Body of pancreas (tissue), 4 donors: ENCODE measurements at regions of chr6 and their contacts with region 1.

Region 1: DNA sequence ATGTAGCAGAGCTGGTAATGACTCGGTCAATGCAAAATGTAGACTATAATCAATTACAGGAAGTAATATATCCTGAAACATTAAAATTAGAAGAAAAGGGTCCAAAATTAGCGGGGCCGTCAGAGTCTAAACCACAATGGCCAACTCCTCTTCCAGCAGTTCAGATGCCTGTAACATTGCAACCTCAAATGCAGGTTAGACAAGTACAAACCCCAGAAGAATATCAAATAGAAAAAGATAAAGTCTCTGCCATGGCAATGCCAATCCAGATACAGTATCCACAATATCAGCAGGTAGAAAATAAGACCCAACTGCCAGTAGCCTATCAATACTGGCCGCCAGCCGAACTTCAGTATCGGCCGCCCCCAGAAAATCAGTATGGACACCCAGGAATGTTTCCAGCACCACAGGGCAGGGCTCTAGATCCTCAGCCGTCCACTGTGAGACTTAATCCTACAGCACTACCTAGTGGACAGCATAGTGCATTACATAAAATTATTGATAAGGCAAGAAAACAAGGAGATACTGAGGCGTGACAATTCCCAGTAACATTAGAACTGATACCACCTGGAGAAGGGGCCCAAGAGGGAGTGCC is 158.4 kb downstream of the GPX5 start:
- DNase-seq: peak in 3 of 4 donors; percentile 7 to 12 (median 10)
- ATAC-seq: no peak
- H3K4me3 ChIP-seq: no peak overlapping the region
- H3K27ac ChIP-seq: no peak overlapping the region
- H3K4me1 ChIP-seq: no peaks in the 10 kb centered on the region
- H3K27me3 ChIP-seq: peaks cover 0 to 11% of the 10 kb centered on the region in 2 donors
- CTCF ChIP-seq: peak in 6 of 7 experiments; percentile 28 to 47 (median 35)
- POLR2A ChIP-seq: no peak

Region 2: DNA sequence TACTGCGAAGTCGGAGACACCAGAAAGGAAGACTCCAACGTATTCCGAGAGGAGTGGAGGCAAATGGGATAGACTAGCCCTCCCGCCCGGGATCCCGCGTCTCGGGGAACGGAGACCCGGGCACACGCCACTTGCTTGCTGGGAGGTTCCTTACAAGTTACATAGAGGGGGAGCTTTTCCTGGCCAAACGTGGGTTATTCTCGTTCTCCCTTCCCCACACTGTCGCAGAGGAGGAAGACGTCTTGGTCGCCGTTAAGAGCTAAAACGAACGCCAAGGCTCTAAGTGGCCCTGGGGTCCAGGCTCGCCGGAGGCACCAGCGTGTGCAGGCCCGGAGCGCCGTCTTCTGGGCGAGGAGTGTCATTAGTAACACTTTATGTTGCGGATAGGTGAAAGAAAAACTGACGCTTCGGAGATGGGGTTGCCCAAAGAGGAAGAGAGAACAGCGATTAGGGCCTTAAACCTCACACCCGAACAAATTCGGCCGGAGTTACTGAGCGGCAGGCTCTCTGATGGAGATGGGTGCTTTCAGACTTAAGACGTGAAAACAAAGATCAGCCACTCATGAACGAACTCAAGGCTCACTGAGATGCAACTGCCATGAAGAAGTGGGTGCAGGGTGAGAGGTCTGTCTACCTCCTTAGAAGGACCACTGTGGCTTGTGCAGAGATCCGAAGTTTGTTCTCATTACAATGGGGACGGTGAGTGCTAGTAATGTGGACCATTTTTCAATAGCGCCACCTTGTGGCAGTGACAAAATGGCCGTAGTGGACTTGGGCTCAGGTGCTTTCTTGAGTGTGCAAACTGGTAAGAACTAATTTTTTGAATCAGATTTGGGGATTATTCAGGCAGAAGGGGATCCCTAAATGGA is 332.8 kb after region 1 on chr6:
- intact Hi-C with region 1: loop called (anchors 5 kb)
- DNase-seq: peak; percentile 78 to 87 (median 84)
- ATAC-seq: peak; percentile 87
- H3K4me3 ChIP-seq: peak overlapping the region in 1 of 2 donors; percentile 24
- H3K27ac ChIP-seq: no peak overlapping the region
- H3K4me1 ChIP-seq: peaks cover 10% of the 10 kb centered on the region
- H3K27me3 ChIP-seq: peaks cover 0 to 7% of the 10 kb centered on the region in 2 donors
- CTCF ChIP-seq: peak; percentile 26 to 87 (median 81)
- POLR2A ChIP-seq: no peak

Region 3: DNA sequence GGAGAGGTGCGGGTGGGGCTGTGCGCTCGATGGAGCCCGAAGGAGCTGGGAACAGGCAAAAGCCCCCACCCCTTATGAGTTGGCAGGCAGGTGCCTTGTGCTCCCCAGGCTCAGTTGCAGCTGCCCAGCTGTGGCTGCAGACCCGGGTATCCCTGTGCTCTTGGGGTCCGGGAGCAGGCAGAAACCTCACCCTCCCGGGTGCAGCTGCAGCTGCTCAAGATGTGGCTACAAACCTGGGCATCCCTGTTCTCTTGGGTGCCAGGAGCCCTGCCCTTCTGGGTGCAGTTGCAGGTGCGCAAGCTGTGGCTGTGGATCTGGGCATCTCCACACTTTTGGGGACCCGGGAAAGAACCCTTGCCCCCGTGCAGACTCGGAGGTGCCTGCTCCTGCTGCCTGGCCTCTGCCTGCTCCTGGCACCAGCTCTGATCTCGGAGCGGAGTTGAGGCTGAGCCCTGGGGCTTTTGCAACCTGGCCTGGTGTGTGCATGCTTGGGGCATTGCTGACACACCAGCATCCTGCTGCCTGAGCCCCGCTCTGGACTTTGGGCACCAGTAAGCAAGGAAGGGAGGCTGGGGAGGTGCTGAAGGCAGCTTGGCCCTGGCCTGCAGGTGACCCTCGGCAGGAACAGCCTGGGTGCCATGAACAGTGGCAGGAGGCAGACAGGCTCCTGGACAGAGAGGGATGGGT is 445.4 kb after region 1 on chr6:
- intact Hi-C with region 1: no loop called
- DNase-seq: no peak
- ATAC-seq: no peak
- H3K4me3 ChIP-seq: no peak overlapping the region
- H3K27ac ChIP-seq: no peak overlapping the region
- H3K4me1 ChIP-seq: no peaks in the 10 kb centered on the region
- H3K27me3 ChIP-seq: peaks cover 0 to 6% of the 10 kb centered on the region in 2 donors
- CTCF ChIP-seq: no peak
- POLR2A ChIP-seq: no peak

Region 4: GRCh38 chr6:29589423-29590048 is 905.5 kb after region 1 on chr6:
- intact Hi-C with region 1: loop called (anchors 10 kb)
- DNase-seq: peak; percentile 47 to 65 (median 57)
- ATAC-seq: peak; percentile 71
- H3K4me3 ChIP-seq: no peak overlapping the region
- H3K27ac ChIP-seq: no peak overlapping the region
- H3K4me1 ChIP-seq: no peaks in the 10 kb centered on the region
- H3K27me3 ChIP-seq: no peaks in the 10 kb centered on the region
- CTCF ChIP-seq: peak; percentile 76 to 98 (median 95)
- POLR2A ChIP-seq: no peak